HCT116 (cell line): ENCODE measurements at regions of chr10 and their contacts with region 1.

Region 1: DNA sequence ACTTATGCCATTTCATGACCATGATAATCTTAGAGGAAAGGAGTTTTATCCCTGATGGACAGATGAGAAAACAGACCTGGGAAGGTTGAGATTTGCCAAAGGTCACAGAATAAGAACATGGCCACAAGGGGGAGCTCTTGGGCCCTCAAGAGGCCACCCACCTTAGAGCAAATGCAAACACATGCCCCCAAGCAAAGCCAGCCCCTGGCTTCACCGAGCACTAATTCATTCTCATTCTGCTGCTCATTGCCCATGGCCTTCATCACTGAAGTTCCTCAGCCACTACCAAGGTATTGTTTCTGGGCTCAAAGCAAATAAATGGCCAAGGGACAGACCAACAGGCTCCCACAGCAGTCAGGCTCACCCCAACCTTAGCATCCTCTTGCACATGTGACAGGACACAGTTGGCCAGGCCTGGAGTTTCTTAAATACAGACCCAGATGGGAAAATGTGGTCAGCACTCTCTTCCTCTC is 44.2 kb downstream of the PDLIM1 start:
- DNase-seq: peak; percentile 65
- ATAC-seq: peak; percentile 79
- H3K4me3 ChIP-seq: no peak overlapping the region
- H3K27ac ChIP-seq: no peak overlapping the region
- H3K4me1 ChIP-seq: peaks cover 0 to 15% of the 10 kb centered on the region in 2 experiments; a peak in 1 of 4 replicates
- H3K27me3 ChIP-seq: no peaks in the 10 kb centered on the region
- CTCF ChIP-seq: peak; percentile 78 to 84 (median 82)
- POLR2A ChIP-seq: no peak
- RAD21 ChIP-seq: peak; percentile 88

Region 2: DNA sequence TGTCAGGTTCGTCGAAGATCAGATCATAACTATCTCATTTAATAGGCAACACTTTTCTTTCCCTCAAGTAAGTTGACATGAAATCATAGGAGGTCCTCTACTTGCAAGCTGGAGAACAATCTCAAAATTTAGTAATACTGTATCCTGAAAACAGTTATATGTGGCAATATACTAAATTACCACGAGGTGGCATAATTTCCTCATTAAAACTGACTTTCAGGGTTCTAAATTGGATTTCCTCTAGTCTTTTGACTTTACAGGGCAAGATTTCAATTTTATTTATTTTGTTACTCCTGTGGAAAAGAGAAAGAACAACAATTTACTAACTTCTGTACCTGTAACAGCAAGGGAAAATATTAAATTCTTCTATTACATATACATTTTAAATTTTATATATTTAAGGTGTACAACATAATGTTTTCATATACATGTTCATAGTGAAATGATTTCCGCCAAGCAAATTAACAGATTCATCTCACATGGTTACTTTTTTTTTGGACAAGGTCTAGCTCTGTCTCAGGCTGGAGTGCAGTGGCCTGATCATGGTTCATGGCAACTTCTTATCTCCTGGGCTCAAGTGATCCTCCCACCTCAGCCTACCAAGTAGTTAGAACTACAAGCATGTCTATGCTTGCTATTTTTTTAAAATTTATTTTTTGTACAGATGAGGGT is 616.5 kb before region 1 on chr10:
- CTCF ChIA-PET with region 1: interaction called, 4 read pairs
- POLR2A ChIA-PET with region 1: no interaction called
- RAD21 ChIA-PET with region 1: no interaction called
- intact Hi-C with region 1: loop called (anchors 1 kb)
- DNase-seq: peak; percentile 24
- ATAC-seq: no peak
- H3K4me3 ChIP-seq: no peak overlapping the region
- H3K27ac ChIP-seq: no peak overlapping the region
- H3K4me1 ChIP-seq: no peaks in the 10 kb centered on the region
- H3K27me3 ChIP-seq: no peaks in the 10 kb centered on the region
- CTCF ChIP-seq: peak; percentile 38 to 69 (median 58); a peak in 5 of 6 replicates
- POLR2A ChIP-seq: no peak
- RAD21 ChIP-seq: peak; percentile 78

Region 3: GRCh38 chr10:95183271-95184230 is 63.1 kb before region 1 on chr10:
- CTCF ChIA-PET with region 1: interaction called, 9 read pairs
- POLR2A ChIA-PET with region 1: no interaction called
- RAD21 ChIA-PET with region 1: no interaction called
- intact Hi-C with region 1: loop called (anchors 1 kb)
- DNase-seq: peak; percentile 73
- ATAC-seq: peak; percentile 98
- H3K4me3 ChIP-seq: peak overlapping the region; percentile 50 to 67
- H3K27ac ChIP-seq: peak overlapping the region; percentile 49
- H3K4me1 ChIP-seq: peaks cover 0 to 9% of the 10 kb centered on the region in 2 experiments; a peak in 2 of 4 replicates
- H3K27me3 ChIP-seq: no peaks in the 10 kb centered on the region
- CTCF ChIP-seq: peak; percentile 78 to 98 (median 84)
- POLR2A ChIP-seq: no peak
- RAD21 ChIP-seq: peak; percentile 76

Region 4: DNA sequence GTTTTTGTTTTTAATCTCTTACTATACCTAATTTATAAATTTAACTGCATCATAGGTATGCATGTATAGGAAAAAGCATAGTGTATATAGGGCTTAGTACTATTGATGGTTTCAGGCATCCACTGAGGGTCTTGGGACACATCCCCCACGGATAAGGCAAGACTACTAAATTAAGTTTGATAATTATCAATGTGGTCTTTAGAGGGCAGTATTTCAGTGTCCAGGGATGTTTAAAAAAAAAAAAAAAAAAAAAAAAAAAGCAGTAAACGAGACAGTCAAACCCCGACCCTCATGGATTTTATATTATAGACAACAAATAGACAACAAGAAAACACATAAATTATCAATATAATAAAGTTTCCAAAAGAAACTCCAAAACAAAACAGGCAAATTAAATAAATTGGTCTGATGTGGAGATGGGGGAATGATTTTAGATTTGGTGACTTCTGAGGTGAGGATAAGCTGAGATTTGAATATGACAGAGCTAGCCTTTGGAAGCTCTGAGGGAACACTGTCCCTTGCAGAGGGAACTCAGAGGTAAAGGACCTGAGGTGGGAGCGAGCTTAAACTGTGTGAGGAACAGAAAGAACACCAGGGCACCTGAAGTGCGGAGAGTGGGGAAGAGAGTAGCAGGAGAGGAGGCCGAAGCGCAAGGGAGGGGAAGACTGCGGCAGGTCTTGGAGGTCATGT is 37.8 kb before region 1 on chr10:
- CTCF ChIA-PET with region 1: interaction called, 5 read pairs
- POLR2A ChIA-PET with region 1: no interaction called
- RAD21 ChIA-PET with region 1: no interaction called
- intact Hi-C with region 1: loop called (anchors 1 kb)
- DNase-seq: peak; percentile 8
- ATAC-seq: peak; percentile 63; the same call in 1 of the 2 replicates
- H3K4me3 ChIP-seq: no peak overlapping the region
- H3K27ac ChIP-seq: no peak overlapping the region
- H3K4me1 ChIP-seq: peaks cover 6 to 24% of the 10 kb centered on the region in 2 experiments
- H3K27me3 ChIP-seq: no peaks in the 10 kb centered on the region
- CTCF ChIP-seq: peak; percentile 17 to 57 (median 49); a peak in 4 of 6 replicates
- POLR2A ChIP-seq: no peak
- RAD21 ChIP-seq: peak; percentile 55

Region 5: GRCh38 chr10:95363303-95363912 is 116.8 kb after region 1 on chr10:
- CTCF ChIA-PET with region 1: interaction called, 78 read pairs
- POLR2A ChIA-PET with region 1: interaction called, 3 read pairs
- RAD21 ChIA-PET with region 1: interaction called, 6 to 11 read pairs
- intact Hi-C with region 1: loop called (anchors 1 kb)
- DNase-seq: peak; percentile 61
- ATAC-seq: peak; percentile 84
- H3K4me3 ChIP-seq: no peak overlapping the region
- H3K27ac ChIP-seq: no peak overlapping the region
- H3K4me1 ChIP-seq: no peaks in the 10 kb centered on the region; a peak in 1 of 4 replicates
- H3K27me3 ChIP-seq: no peaks in the 10 kb centered on the region
- CTCF ChIP-seq: peak; percentile 75 to 96 (median 89)
- POLR2A ChIP-seq: no peak
- RAD21 ChIP-seq: peak; percentile 98

Region 6: DNA sequence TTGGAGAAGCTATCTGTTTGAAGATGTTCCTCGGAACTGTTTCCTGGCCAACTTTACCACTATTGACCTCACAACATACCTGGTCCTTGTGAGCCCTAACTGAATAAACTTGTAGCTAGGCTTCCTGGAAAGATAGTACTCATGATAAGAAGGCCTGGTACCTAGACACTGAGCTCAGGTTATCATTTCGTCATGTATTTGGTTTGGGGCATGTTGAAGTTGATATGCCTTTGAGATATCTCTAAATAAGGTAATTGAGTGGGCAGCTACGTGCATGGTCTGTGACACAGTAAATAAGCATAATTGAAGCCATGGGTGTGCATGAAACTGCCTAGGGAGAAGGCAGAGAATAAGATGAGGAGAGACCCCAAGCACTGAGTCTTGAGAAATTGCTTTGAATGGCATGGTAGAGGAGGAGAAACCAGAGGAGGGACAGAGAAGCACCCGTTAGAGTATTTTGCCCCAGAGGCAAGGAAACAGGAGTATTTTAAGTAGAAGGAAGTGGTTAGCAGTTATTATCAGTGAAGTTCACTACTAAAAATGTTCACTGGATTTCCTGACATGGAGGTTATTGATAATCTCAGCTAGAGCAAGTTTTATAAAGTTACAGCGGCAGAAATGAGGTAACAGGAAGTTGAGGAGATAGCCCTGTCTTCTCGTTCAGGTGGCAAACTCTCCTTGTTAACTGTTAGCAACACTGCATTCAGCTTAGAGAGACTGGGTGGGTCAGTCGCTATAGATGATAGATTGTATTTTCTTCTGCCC is 716.8 kb after region 1 on chr10:
- CTCF ChIA-PET with region 1: no interaction called
- POLR2A ChIA-PET with region 1: no interaction called
- RAD21 ChIA-PET with region 1: no interaction called
- intact Hi-C with region 1: no loop called
- DNase-seq: no peak
- ATAC-seq: no peak
- H3K4me3 ChIP-seq: no peak overlapping the region
- H3K27ac ChIP-seq: no peak overlapping the region
- H3K4me1 ChIP-seq: no peaks in the 10 kb centered on the region
- H3K27me3 ChIP-seq: no peaks in the 10 kb centered on the region
- CTCF ChIP-seq: no peak
- POLR2A ChIP-seq: no peak
- RAD21 ChIP-seq: no peak